Transverse colon (tissue), 4 donors: ENCODE measurements at regions of chr9 and their contacts with region 1.

Region 1: DNA sequence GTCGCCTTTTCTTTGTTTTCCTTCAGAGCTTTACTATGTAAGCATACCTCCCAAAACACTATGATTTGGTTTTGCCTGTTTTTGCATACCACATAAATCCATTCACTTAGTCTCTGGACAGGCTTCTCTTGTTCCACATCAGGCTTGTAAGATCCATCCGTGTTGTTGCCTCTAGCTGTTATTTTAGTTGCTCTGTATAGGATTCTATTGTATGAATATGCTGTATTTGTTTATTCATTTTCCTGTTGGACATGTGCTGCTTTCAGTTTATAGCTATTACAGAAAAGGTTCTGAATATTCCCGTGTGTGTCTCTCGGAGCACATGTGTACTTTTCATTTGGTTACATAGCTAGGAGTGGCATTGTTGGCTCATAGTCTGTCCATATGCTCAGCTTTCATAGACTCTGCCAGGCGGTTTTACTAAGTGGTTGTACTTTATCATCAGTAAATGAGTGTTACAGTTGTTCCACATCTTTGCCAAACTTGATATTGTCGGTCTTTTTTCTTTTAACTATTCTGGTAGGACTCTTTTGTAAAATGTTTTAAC is 41.8 kb downstream of the NUP214 start:
- DNase-seq: no peak
- H3K4me3 ChIP-seq: no peak overlapping the region
- H3K27ac ChIP-seq: peak overlapping the region in 3 of 4 donors; percentile 5 to 55 (median 11)
- H3K4me1 ChIP-seq: peaks cover 0 to 17% (median 8%) of the 10 kb centered on the region in 4 donors
- H3K27me3 ChIP-seq: no peaks in the 10 kb centered on the region
- CTCF ChIP-seq: no peak
- EP300 ChIP-seq: no peak
- POLR2A ChIP-seq: no peak

Region 2: GRCh38 chr9:129242941-129243561 is 1924.2 kb before region 1 on chr9:
- in situ Hi-C with region 1: no loop called
- intact Hi-C with region 1: no loop called
- DNase-seq: no peak
- H3K4me3 ChIP-seq: no peak overlapping the region
- H3K27ac ChIP-seq: no peak overlapping the region
- H3K4me1 ChIP-seq: no peaks in the 10 kb centered on the region
- H3K27me3 ChIP-seq: peaks cover 5% of the 10 kb centered on the region
- CTCF ChIP-seq: no peak
- EP300 ChIP-seq: no peak
- POLR2A ChIP-seq: no peak

Region 3: DNA sequence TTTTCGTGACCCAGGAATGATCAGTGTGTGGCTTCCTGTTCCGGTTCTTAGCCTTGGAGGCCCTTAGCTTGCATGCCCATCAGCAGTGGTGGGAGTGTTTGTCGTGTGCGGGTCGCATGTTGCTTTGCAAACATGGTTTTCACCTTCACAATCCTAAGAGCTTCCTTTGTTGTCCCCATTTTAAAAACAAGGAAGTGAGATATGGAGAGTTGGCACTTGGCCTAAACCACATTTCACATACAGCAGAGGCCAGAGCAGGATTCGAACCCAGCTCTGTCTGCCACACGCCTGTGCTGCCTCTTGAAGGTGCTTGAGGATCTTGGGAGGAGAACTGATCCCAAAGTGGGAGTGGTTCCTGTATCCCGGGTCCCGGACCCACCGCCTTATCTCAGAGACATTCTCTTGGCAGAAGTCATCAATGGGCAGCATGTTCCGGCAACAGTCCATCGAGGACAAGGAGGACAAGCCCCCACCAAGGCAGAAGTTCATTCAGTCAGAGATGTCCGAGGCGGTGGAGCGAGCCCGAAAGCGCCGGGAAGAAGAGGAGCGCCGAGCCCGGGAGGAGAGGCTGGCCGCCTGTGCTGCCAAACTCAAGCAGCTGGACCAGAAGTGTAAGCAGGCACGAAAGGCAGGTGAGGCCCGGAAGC is 297.3 kb after region 1 on chr9:
- in situ Hi-C with region 1: loop called in 1 of 4 experiments (anchors 25 kb)
- intact Hi-C with region 1: no loop called
- DNase-seq: no peak
- H3K4me3 ChIP-seq: no peak overlapping the region
- H3K27ac ChIP-seq: no peak overlapping the region
- H3K4me1 ChIP-seq: no peaks in the 10 kb centered on the region
- H3K27me3 ChIP-seq: no peaks in the 10 kb centered on the region
- CTCF ChIP-seq: no peak
- EP300 ChIP-seq: no peak
- POLR2A ChIP-seq: no peak